CD4-positive, alpha-beta T cell (primary cell): ENCODE measurements at regions of chr11 and their contacts with region 1.

Region 1: GRCh38 chr11:85759915-85760314 is 51.0 kb downstream of the SYTL2 start:
- DNase-seq: no peak
- ATAC-seq: no peak
- H3K4me3 ChIP-seq: no peak overlapping the region
- H3K4me3 Mint-ChIP-seq: no peak overlapping the region
- H3K27ac ChIP-seq: no peak overlapping the region
- H3K27ac Mint-ChIP-seq: no peak overlapping the region
- H3K4me1 ChIP-seq: peaks cover 41% of the 10 kb centered on the region
- H3K4me1 Mint-ChIP-seq: peaks cover 69% of the 10 kb centered on the region
- H3K27me3 ChIP-seq: no peaks in the 10 kb centered on the region
- H3K27me3 Mint-ChIP-seq: no peaks in the 10 kb centered on the region
- CTCF ChIP-seq: no peak

Region 2: DNA sequence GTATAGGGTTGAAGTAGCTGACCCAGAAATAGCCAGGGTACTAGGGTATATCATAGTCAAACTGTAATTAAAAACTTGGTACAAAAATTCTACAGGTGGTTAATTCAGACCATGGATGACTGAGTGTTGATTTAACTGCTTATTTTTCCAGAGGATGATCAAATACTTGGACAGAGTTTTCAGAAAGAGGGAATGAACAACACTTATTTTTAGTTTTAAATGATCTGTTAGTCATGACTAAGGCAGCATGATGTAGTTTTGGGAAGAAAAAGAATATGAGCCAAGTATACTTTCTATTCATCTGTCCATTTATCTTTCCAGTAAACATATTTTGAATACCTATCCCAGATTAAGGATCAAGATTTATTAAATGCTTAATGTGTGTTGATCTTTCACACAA is 54.1 kb before region 1 on chr11:
- CTCF ChIA-PET with region 1: no interaction called
- POLR2A ChIA-PET with region 1: no interaction called
- intact Hi-C with region 1: no loop called
- DNase-seq: no peak
- ATAC-seq: no peak
- H3K4me3 ChIP-seq: no peak overlapping the region
- H3K4me3 Mint-ChIP-seq: no peak overlapping the region
- H3K27ac ChIP-seq: no peak overlapping the region
- H3K27ac Mint-ChIP-seq: no peak overlapping the region
- H3K4me1 ChIP-seq: no peaks in the 10 kb centered on the region
- H3K4me1 Mint-ChIP-seq: peaks cover 2% of the 10 kb centered on the region
- H3K27me3 ChIP-seq: no peaks in the 10 kb centered on the region
- H3K27me3 Mint-ChIP-seq: no peaks in the 10 kb centered on the region
- CTCF ChIP-seq: no peak

Region 3: DNA sequence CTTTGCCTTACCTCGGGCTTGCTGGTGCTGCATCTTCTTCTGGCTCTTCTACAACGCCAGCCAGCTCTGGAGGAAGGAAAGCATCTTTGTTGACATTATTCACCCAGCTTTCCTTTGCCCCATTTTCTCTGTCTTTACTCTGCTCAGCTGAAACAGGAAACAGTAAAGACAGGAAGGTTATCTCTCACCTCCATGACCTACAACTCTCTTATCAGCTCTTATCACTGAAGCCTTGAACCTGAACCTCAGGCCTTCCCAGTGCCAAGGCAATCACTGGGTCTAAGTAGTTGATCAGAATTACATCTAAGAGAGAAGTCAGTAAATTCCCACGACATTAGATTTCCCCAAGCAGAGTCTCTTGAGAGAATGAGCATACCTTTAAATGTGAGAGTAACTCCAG is 14.3 kb before region 1 on chr11:
- CTCF ChIA-PET with region 1: interaction called, 4 read pairs
- POLR2A ChIA-PET with region 1: interaction called, 15 read pairs
- intact Hi-C with region 1: no loop called
- DNase-seq: peak in 3 of 14 experiments; percentile 31 to 53 (median 35)
- ATAC-seq: peak; percentile 27
- H3K4me3 ChIP-seq: no peak overlapping the region
- H3K4me3 Mint-ChIP-seq: peak overlapping the region; percentile 43
- H3K27ac ChIP-seq: peak overlapping the region in 1 of 2 donors; percentile 4
- H3K27ac Mint-ChIP-seq: peak overlapping the region; percentile 61
- H3K4me1 ChIP-seq: peaks cover 40% of the 10 kb centered on the region
- H3K4me1 Mint-ChIP-seq: peaks cover 81% of the 10 kb centered on the region
- H3K27me3 ChIP-seq: no peaks in the 10 kb centered on the region
- H3K27me3 Mint-ChIP-seq: no peaks in the 10 kb centered on the region
- CTCF ChIP-seq: no peak

Region 4: DNA sequence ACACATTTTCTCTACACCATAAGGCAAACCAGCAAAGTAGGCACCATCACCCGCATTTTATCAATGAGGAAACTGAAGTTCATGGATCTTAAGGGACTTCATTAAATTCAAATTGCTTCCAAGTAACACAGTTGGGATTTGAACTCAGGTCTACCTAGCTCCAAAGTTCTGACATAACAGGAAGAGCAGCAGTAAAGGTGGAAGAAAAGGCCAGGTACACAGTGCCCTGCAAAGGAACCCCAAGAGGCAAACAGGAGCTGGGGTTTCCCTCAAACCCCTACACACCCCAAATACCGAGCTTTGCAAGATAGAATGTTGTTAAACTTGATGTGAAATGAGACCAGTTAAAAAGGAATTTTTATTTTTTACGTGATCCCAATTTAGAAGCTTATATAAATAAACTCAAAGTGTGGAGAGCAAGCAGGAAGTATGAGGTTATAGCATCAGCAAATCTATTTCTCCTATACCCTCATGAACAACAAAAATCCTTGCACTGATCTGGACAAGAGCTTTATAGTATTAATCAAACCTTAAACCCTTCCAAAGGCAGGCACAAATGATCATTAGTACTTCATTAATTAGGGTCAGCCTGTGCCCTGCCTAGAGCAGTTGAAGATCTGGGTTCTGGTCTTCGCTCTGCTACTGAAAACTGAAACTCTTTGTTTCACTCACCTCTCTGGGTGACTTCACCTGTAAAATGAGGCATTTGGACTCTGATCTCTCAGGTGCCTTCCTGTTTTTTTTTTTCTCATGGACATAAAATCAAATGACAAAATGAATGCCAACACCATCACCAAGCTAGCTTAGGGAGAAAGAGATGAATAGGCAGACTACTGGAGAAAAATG is 14.6 kb after region 1 on chr11:
- CTCF ChIA-PET with region 1: interaction called, 3 read pairs
- POLR2A ChIA-PET with region 1: interaction called, 10 read pairs
- intact Hi-C with region 1: no loop called
- DNase-seq: no peak
- ATAC-seq: peak; percentile 39
- H3K4me3 ChIP-seq: no peak overlapping the region
- H3K4me3 Mint-ChIP-seq: peak overlapping the region; percentile 40
- H3K27ac ChIP-seq: no peak overlapping the region
- H3K27ac Mint-ChIP-seq: peak overlapping the region; percentile 37
- H3K4me1 ChIP-seq: peaks cover 7% of the 10 kb centered on the region
- H3K4me1 Mint-ChIP-seq: peaks cover 36% of the 10 kb centered on the region
- H3K27me3 ChIP-seq: no peaks in the 10 kb centered on the region
- H3K27me3 Mint-ChIP-seq: no peaks in the 10 kb centered on the region
- CTCF ChIP-seq: no peak

Region 5: GRCh38 chr11:85810871-85811611 is 51.1 kb after region 1 on chr11 and contains the start of gene SYTL2:
- CTCF ChIA-PET with region 1: interaction called, 7 read pairs
- POLR2A ChIA-PET with region 1: interaction called, 5 read pairs
- intact Hi-C with region 1: loop called in 1 of 2 experiments (anchors 2 kb)
- DNase-seq: peak; percentile 46 to 91 (median 69)
- ATAC-seq: peak; percentile 80
- H3K4me3 ChIP-seq: peak within 1 kb of the TSS; percentile 68
- H3K4me3 Mint-ChIP-seq: peak within 1 kb of the TSS; percentile 96
- H3K27ac ChIP-seq: peak within 1 kb of the TSS in 1 of 2 donors; percentile 43
- H3K27ac Mint-ChIP-seq: peak within 1 kb of the TSS; percentile 89
- H3K4me1 ChIP-seq: peaks cover 37% of the 10 kb centered on the region
- H3K4me1 Mint-ChIP-seq: peaks cover 48% of the 10 kb centered on the region
- H3K27me3 ChIP-seq: no peaks in the 10 kb centered on the region
- H3K27me3 Mint-ChIP-seq: no peaks in the 10 kb centered on the region
- CTCF ChIP-seq: no peak
- total RNA-seq, gene SYTL2: 35.4 to 36.7 TPM